ENCODE measurements at regions of chr17 and their contacts with region 1.

Region 1: DNA sequence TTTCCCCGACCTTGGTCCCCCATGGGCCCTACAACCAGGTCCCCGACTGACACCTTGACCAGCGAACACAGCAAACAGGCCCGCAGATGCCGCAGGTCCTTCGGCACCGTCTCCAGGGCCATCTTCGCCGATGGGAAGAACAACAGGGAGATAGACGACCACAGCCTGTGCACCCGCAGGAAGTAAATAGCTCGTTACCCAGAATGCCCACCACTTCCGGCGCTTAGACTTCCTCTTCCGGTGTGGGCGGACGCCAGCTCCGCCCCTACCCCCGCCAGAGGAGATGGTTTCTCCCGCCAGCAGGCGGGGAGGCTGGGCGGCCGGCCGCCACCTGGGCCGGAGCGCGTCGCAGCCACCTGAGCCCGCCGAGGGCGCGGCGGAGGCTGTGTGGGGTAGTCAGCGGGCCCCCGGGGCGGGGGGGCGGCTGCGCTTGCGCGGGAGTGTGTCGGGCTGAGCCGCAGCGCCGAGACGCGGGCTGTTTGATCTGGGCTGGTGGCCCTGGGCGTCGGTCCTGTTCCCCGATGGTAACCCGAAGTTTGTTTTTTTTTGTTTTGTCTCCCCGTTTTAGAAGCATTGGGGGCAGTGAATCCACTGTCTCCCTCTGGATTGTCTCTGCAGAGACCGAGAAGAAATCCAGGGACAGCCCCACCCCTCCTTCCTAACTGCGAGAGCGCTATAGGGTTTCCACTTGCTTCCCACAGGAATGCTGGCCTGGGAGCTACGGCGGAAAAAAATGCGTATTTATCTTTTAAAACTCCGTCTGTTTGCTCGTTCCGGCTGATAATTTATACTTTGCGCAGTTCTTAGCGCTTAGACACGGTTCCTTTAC is at the start of gene SUPT4H1:
- DNase-seq: peak; percentile 51
- H3K4me3 ChIP-seq: peak within 1 kb of the TSS; percentile 71 to 90 (median 84)
- H3K27ac ChIP-seq: peak within 1 kb of the TSS; percentile 94 to 97 (median 94)
- H3K4me1 ChIP-seq: peaks cover 6 to 29% (median 7%) of the 10 kb centered on the region in 3 donors
- H3K27me3 ChIP-seq: no peaks in the 10 kb centered on the region
- CTCF ChIP-seq: peak in 4 of 6 experiments; percentile 17 to 49 (median 44)
- POLR2A ChIP-seq: peak in 3 of 4 donors; percentile 70 to 93 (median 89)
- total RNA-seq, gene SUPT4H1: 29.9 to 54.9 (median 37.0) TPM

Region 2: DNA sequence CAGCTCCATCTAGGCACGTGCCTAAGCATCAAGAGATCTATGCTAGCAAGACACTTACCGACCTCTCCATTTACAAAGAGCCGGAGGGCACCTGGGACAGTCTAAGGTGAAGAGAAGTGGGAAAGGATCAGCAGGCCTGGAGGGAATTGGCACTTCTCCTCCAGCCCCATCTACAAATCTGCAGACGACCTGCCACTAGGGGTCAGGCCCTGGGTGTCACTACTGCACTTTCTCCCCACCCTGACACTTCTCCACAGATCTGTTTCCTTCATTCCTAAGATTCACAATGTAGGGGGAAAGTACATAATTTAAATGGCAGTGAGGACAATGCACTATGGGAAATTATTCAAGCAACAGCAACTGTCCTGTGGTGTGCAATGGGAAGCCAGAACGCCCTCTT is 141.3 kb before region 1 on chr17:
- intact Hi-C with region 1: no loop called
- DNase-seq: no peak
- H3K4me3 ChIP-seq: no peak overlapping the region
- H3K27ac ChIP-seq: no peak overlapping the region
- H3K4me1 ChIP-seq: no peaks in the 10 kb centered on the region
- H3K27me3 ChIP-seq: no peaks in the 10 kb centered on the region
- CTCF ChIP-seq: no peak
- POLR2A ChIP-seq: no peak

Region 3: DNA sequence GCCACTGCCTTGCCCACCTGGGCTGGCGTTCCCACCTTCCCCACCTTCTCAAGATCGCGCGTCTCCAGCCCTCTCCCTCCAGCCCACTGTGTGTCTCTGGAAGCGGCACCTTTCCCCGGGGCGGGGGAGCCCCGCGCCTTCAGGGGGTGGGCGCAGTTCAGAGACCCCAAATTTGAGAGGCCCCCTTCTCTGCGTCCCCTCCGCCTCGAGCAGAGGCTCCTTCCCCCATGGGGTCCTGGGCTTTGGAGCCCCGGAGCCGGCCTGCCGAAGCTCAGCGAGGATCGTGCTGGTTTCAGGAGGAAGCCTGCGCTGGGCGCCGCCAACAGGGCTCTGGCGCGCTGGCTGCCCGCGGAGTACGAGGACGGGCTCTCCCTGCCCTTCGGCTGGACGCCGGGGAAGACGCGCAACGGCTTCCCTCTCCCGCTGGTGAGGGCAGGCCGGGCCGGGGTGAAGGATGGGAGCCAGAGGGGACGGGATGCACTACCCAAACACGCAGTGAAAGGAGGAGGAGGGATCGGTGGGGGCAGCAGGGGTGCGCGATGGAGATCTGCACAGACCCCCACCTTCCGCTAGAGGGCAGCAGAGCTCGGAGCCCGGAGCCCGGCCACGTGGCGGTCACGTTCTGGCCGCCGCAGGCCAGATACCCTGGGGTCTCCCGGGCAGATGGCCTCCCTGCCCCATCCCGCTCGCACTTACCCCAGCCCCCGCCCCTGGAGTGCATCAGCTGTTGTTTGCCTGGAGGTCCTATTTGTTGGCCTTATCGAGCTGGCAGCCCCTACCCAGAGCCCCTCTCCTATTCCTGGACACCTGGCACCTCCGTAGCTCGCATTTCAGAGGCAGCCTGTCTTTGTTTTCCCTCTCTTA is 102.7 kb before region 1 on chr17:
- intact Hi-C with region 1: no loop called
- DNase-seq: no peak
- H3K4me3 ChIP-seq: peak overlapping the region; percentile 25 to 68 (median 44)
- H3K27ac ChIP-seq: no peak overlapping the region
- H3K4me1 ChIP-seq: peaks cover 8 to 14% (median 9%) of the 10 kb centered on the region in 3 donors
- H3K27me3 ChIP-seq: peaks cover 0 to 82% (median 2%) of the 10 kb centered on the region in 4 donors
- CTCF ChIP-seq: peak; percentile 76 to 91 (median 84)
- POLR2A ChIP-seq: no peak

Region 4: DNA sequence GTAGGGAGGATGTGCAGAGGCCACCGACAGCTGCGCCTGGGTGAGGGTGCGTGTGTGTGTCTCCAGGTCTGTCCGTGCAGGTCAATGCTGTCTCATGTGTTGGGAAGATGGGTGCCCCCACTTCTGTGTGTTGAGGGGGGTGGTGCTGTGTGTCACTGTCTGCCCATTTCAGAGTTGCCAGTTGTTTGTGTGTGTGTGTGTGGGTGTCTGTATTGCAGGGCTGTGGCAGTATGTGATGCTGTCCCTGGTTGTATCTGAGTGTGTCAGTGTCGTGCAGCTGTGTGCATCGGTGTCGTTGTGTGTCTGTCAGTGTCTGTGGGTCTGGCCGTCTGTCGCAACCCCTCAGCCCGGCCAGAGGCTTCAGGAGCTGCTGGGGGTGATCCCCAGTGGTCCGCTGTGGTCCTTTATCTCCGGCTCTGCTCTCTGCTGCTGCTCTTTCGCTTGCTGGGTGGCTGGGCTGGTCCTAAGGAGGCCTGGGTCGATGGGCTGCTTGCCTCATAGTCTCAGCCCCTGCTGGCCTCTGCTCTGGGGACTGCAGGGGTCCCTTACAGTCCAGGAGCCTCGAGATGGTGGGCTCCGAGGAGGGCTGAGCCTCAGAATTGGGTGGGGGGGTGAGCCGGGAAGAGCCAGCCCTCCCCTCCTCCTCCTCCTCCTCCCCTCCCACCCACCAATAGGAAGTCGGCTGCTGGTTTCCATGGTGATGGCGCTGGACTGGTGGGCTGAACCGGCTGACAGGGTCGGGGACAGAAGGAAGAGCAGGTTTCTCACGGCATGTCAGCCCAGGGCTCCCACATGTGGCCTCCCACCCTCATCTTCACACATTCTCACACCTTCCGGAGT is 23.8 kb before region 1 on chr17 and contains the start of gene TSPOAP1:
- intact Hi-C with region 1: no loop called
- DNase-seq: no peak
- H3K4me3 ChIP-seq: peak within 1 kb of the TSS in 2 of 4 donors; percentile 21 to 42
- H3K27ac ChIP-seq: peak within 1 kb of the TSS in 2 of 4 donors; percentile 28 to 42
- H3K4me1 ChIP-seq: peaks cover 5 to 35% (median 6%) of the 10 kb centered on the region in 3 donors
- H3K27me3 ChIP-seq: peaks cover 0 to 31% (median 0%) of the 10 kb centered on the region in 4 donors
- CTCF ChIP-seq: no peak
- POLR2A ChIP-seq: no peak
- total RNA-seq, gene TSPOAP1: 2.9 to 16.0 (median 3.3) TPM

Region 5: GRCh38 chr17:58415371-58416055 is 63.3 kb after region 1 on chr17:
- intact Hi-C with region 1: no loop called
- DNase-seq: no peak
- H3K4me3 ChIP-seq: peak overlapping the region; percentile 41 to 60 (median 48)
- H3K27ac ChIP-seq: peak overlapping the region; percentile 43 to 87 (median 80)
- H3K4me1 ChIP-seq: peaks cover 0 to 44% (median 0%) of the 10 kb centered on the region in 3 donors
- H3K27me3 ChIP-seq: peaks cover 0 to 4% (median 0%) of the 10 kb centered on the region in 4 donors
- CTCF ChIP-seq: peak in 2 of 6 experiments; percentile 18 to 36
- POLR2A ChIP-seq: no peak

Region 6: DNA sequence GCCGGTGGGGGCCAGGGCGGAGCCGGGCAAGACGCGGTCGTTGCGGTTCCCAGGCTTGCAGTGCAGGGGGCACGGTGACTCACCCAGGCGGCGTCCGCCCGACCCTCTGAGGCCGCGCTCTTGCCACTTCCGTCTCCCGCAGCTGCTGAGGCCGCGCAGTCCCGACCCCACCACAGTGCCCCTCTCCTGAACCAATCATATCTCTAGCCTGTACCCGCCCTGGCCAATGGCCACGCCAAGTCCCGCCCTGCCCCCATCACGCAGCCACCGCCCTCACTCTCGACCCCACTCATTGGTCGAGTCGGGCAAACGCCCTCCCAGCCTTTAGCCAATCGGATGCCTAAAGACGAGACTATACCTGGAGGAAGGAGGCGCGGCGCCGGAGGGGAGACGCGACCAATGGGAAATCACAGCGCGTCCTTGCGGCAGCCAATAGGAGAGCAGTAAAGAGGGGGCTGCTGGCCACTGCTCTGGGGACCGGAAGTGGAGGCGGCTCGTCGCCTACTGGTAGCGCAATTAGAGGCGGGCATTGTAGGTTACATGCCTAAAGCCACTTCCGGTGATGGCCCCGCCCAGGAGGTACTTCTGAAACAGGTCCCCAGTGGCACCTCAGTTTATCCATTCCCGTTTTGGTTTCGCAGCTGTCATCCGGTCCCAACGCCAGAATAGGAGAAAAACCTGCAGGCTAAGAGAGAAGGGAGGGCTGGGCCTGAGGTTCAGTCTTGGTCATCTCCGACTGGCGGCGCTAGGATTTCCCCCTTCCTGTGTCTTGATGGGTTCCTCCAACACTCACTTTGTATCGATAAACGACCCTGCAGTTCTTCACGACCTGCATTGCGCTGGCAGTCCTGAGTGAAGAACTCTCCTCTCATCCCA is 165.7 kb after region 1 on chr17:
- intact Hi-C with region 1: loop called (anchors 10 kb)
- DNase-seq: peak; percentile 100
- H3K4me3 ChIP-seq: peak overlapping the region; percentile 51 to 82 (median 79)
- H3K27ac ChIP-seq: peak overlapping the region; percentile 96 to 100 (median 98)
- H3K4me1 ChIP-seq: peaks cover 27 to 64% (median 33%) of the 10 kb centered on the region in 3 donors
- H3K27me3 ChIP-seq: no peaks in the 10 kb centered on the region
- CTCF ChIP-seq: no peak
- POLR2A ChIP-seq: peak in 2 of 4 donors; percentile 48 to 65